Right lobe of liver (tissue), 6 donors: ENCODE measurements at regions of chr11 and their contacts with region 1.

Region 1: DNA sequence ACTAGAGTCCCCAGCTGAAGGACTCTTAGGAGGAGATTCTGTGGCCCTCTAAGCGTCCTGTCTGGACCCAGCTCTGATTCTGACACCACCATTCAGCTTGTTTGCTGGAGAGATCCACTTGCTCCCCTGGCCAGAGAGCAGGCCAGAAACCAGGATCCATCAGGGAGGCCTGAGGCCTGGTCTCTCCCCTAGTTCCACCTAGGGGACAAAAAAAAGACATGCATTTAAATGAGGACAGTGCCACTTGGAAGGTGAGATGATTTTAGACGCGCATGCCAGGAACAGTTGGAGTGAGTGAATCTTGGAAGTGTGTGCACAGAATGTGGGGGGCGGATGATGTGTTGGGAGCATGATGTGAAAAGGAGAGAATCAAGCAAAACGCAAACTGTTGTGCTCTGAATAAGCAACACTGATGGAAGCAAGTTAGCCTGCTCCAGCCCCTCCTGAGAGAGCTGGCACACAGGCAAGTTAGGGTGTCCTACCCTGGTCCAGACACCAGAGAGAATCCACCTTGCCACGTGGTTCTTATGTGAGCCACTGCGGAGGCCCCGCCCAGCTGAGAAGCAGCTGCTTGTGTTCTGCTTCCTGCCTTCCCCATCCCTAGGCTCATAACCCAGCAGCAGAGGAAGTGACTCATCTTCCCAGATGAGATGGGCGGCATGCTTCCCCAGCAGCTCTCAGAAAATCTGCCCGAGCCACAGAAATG is 8.0 kb upstream of the SLCO2B1 start:
- DNase-seq: peak; percentile 55 to 70 (median 70)
- ATAC-seq: peak; percentile 63 to 81 (median 76)
- H3K4me3 ChIP-seq: no peak overlapping the region
- H3K27ac ChIP-seq: no peak overlapping the region
- H3K4me1 ChIP-seq: peaks cover 0 to 9% (median 0%) of the 10 kb centered on the region in 4 donors
- H3K27me3 ChIP-seq: no peaks in the 10 kb centered on the region
- CTCF ChIP-seq: no peak
- POLR2A ChIP-seq: no peak

Region 2: GRCh38 chr11:75241036-75241905 is 98.4 kb after region 1 on chr11:
- intact Hi-C with region 1: loop called (anchors 5 kb)
- DNase-seq: peak; percentile 87 to 89 (median 88)
- ATAC-seq: peak; percentile 96 to 99 (median 97)
- H3K4me3 ChIP-seq: peak overlapping the region in 2 of 3 donors; percentile 18 to 41
- H3K27ac ChIP-seq: no peak overlapping the region
- H3K4me1 ChIP-seq: peaks cover 0 to 11% (median 0%) of the 10 kb centered on the region in 4 donors
- H3K27me3 ChIP-seq: peaks cover 0 to 12% of the 10 kb centered on the region in 2 donors
- CTCF ChIP-seq: peak; percentile 86 to 100 (median 94)
- POLR2A ChIP-seq: no peak

Region 3: DNA sequence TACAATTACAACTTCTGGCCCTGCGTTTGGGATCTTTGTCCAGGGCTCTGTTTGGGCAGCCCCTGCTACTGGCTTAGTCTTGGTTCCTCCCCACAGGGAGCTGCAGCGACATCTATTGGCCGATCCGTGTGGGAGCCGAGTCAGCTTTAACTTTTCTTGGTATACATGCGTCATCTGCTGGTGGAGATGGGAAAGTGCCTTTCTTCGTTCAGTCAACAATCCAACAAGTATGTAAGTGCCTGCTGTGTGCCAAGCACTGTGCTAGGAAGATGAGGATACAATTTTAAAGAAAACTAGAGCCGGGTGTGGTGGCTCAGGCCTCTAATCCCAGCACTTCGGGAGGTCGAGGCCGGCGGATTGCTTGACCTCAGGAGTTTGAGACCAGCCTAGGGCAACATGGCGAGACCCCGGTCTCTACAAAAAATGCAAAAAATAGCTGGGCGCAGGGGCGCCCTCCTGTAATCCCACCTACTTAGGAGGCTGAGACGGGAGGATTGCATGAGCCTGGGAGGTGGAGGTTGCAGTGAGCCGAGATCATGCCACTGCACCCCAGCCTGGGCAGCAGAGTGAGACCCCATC is 105.9 kb after region 1 on chr11:
- intact Hi-C with region 1: loop called (anchors 5 kb)
- DNase-seq: peak; percentile 84 to 89 (median 85)
- ATAC-seq: peak; percentile 97 to 99 (median 98)
- H3K4me3 ChIP-seq: no peak overlapping the region
- H3K27ac ChIP-seq: no peak overlapping the region
- H3K4me1 ChIP-seq: peaks cover 0 to 3% (median 0%) of the 10 kb centered on the region in 4 donors
- H3K27me3 ChIP-seq: no peaks in the 10 kb centered on the region
- CTCF ChIP-seq: peak; percentile 99 to 100 (median 100)
- POLR2A ChIP-seq: no peak

Region 4: GRCh38 chr11:75328426-75329277 is 185.8 kb after region 1 on chr11:
- intact Hi-C with region 1: no loop called
- DNase-seq: peak; percentile 77 to 84 (median 80)
- ATAC-seq: peak; percentile 88 to 94 (median 93)
- H3K4me3 ChIP-seq: no peak overlapping the region
- H3K27ac ChIP-seq: peak overlapping the region in 1 of 3 donors; percentile 10
- H3K4me1 ChIP-seq: peaks cover 0 to 22% (median 7%) of the 10 kb centered on the region in 4 donors
- H3K27me3 ChIP-seq: no peaks in the 10 kb centered on the region
- CTCF ChIP-seq: peak; percentile 77 to 81 (median 78)
- POLR2A ChIP-seq: no peak